Adrenal gland (tissue), 19 donors: ENCODE measurements at regions of chr7 and their contacts with region 1.

Region 1: GRCh38 chr7:8436965-8437364 is 3.6 kb downstream of the NXPH1 start:
- DNase-seq: peak; percentile 28 to 73 (median 36)
- H3K4me3 ChIP-seq: peak overlapping the region in 1 of 4 donors; percentile 11
- H3K27ac ChIP-seq: no peak overlapping the region
- H3K4me1 ChIP-seq: no peaks in the 10 kb centered on the region
- H3K27me3 ChIP-seq: peaks cover 6% of the 10 kb centered on the region
- CTCF ChIP-seq: peak; percentile 52 to 60 (median 54)
- POLR2A ChIP-seq: no peak

Region 2: GRCh38 chr7:8714791-8715190 is 277.8 kb after region 1 on chr7:
- intact Hi-C with region 1: loop called in 1 of 2 experiments (anchors 10 kb)
- DNase-seq: peak; percentile 29 to 81 (median 69)
- H3K4me3 ChIP-seq: no peak overlapping the region
- H3K27ac ChIP-seq: no peak overlapping the region
- H3K4me1 ChIP-seq: peaks cover 8 to 13% of the 10 kb centered on the region in 2 donors
- H3K27me3 ChIP-seq: no peaks in the 10 kb centered on the region
- CTCF ChIP-seq: no peak
- POLR2A ChIP-seq: no peak

Region 3: DNA sequence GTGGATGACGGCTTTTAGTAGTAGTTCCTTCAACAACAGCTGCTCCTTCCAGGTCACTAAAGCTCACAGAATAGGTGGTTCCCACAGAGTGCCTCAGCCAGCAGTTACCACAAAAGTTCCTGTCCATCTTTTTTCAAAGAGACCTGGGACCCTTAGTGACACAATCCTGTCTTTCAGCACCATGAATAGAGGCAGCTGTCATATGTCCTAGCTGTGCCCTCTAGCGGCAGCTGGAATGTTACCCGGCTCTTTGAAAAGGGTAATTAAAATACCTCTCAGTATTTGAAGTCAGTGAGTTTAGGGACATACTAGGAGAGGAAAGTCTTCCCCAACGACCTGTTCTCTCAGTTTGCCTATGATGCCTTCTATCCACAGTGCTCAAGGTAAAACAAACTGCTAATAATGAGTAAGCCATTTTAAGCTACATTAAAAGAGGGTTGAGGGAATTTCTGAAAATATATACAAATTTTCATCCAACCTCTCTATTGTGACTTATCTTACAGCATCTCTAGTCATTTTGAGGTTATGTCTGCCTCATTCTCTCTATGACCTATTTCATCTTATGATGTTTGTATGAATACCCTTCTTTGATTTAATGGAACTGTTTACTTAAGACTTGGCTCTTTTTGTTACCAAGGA is 287.2 kb after region 1 on chr7:
- intact Hi-C with region 1: loop called (anchors 5 to 10 kb)
- DNase-seq: peak; percentile 42 to 87 (median 70)
- H3K4me3 ChIP-seq: no peak overlapping the region
- H3K27ac ChIP-seq: no peak overlapping the region
- H3K4me1 ChIP-seq: no peaks in the 10 kb centered on the region
- H3K27me3 ChIP-seq: no peaks in the 10 kb centered on the region
- CTCF ChIP-seq: peak; percentile 56 to 68 (median 62)
- POLR2A ChIP-seq: no peak